ENCODE measurements at regions of chr21 and their contacts with region 1.

Region 1: GRCh38 chr21:41369105-41369919 is 7.5 kb downstream of the MX2 start:
- DNase-seq: peak; percentile 51
- ATAC-seq: peak; percentile 47
- H3K4me3 Mint-ChIP-seq: peak overlapping the region; percentile 71
- H3K27ac Mint-ChIP-seq: peak overlapping the region; percentile 85
- H3K4me1 Mint-ChIP-seq: peaks cover 72% of the 10 kb centered on the region
- H3K27me3 Mint-ChIP-seq: no peaks in the 10 kb centered on the region
- CTCF ChIP-seq: no peak

Region 2: DNA sequence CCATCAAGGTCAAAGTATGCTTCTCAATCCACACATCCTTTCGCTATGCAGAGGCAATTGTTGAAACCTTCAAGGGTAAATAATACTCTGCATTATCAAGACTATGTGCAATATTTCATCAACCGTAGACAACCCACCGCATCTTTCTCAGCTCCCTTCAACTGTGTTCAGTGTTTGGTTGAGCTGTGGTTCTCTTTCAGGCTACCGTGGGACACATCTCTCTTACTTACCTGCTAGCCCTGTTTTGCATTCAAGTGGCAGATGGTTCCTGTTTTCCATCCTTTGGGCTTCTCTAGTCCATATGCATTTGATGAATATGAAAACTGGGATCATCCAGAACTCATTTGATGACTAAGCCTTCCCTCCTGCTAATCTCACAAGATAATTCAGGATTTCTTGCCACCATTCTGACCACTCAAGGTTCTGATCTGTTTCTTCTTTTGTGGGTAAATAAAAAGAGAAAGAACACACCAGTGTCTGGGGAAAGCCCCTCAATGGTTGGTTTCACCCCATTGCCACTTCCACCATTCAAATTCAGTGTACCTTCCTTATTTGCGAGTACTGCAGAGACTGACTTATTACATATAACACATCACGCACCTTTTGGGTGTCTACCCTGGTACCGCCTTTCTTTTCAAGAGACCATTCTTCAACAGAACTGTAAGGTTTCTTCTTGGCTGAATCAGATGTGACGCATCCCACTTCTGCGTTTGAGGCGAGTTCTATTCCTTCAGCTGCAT is 139.6 kb before region 1 on chr21:
- CTCF ChIA-PET with region 1: no interaction called
- POLR2A ChIA-PET with region 1: interaction called, 9 read pairs
- intact Hi-C with region 1: loop called (anchors 2 kb)
- DNase-seq: no peak
- ATAC-seq: peak; percentile 82
- H3K4me3 Mint-ChIP-seq: peak overlapping the region; percentile 78
- H3K27ac Mint-ChIP-seq: peak overlapping the region; percentile 91
- H3K4me1 Mint-ChIP-seq: peaks cover 82% of the 10 kb centered on the region
- H3K27me3 Mint-ChIP-seq: no peaks in the 10 kb centered on the region
- CTCF ChIP-seq: no peak

Region 3: GRCh38 chr21:41419911-41420862 is 50.9 kb after region 1 on chr21:
- CTCF ChIA-PET with region 1: no interaction called
- POLR2A ChIA-PET with region 1: interaction called, 37 read pairs
- intact Hi-C with region 1: loop called (anchors 1 kb)
- DNase-seq: peak; percentile 47
- ATAC-seq: peak; percentile 93
- H3K4me3 Mint-ChIP-seq: peak overlapping the region; percentile 81
- H3K27ac Mint-ChIP-seq: peak overlapping the region; percentile 82
- H3K4me1 Mint-ChIP-seq: peaks cover 61% of the 10 kb centered on the region
- H3K27me3 Mint-ChIP-seq: no peaks in the 10 kb centered on the region
- CTCF ChIP-seq: no peak

Region 4: DNA sequence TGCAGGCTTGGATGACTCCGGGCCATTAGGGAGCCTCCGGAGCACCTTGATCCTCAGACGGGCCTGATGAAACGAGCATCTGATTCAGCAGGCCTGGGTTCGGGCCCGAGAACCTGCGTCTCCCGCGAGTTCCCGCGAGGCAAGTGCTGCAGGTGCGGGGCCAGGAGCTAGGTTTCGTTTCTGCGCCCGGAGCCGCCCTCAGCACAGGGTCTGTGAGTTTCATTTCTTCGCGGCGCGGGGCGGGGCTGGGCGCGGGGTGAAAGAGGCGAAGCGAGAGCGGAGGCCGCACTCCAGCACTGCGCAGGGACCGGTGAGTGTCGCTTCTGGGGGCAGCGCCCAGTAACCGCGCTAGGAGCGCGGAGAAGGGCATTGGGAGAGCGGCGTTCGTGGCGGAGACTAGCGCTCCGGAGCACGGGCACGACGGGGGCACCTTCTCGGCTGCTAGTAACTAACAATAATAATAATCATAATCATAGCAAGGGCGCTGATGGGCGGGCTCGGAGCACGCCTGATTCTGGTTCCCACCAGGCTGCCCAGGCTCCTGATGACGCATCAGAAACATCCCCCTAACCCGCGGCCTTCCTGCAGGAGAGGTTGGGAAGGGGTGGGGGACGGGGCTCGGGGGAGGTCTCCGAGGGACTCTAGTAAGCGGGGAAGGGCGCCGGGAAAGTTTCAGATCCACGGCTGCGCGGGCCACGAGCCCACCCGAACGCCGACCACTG is 56.8 kb after region 1 on chr21 and contains the start of gene MX1:
- CTCF ChIA-PET with region 1: interaction called, 9 read pairs
- POLR2A ChIA-PET with region 1: interaction called, 37 read pairs
- intact Hi-C with region 1: loop called (anchors 1 kb)
- DNase-seq: peak; percentile 77
- ATAC-seq: peak; percentile 97
- H3K4me3 Mint-ChIP-seq: peak within 1 kb of the TSS; percentile 96
- H3K27ac Mint-ChIP-seq: peak within 1 kb of the TSS; percentile 91
- H3K4me1 Mint-ChIP-seq: peaks cover 85% of the 10 kb centered on the region
- H3K27me3 Mint-ChIP-seq: no peaks in the 10 kb centered on the region
- CTCF ChIP-seq: no peak
- total RNA-seq, gene MX1: 64.2 and 64.8 TPM in 2 replicates

Region 5: GRCh38 chr21:41431788-41432548 is 62.7 kb after region 1 on chr21:
- CTCF ChIA-PET with region 1: interaction called, 9 read pairs
- POLR2A ChIA-PET with region 1: interaction called, 37 read pairs
- intact Hi-C with region 1: loop called (anchors 1 kb)
- DNase-seq: peak; percentile 53
- ATAC-seq: peak; percentile 98
- H3K4me3 Mint-ChIP-seq: peak overlapping the region; percentile 52
- H3K27ac Mint-ChIP-seq: peak overlapping the region; percentile 65
- H3K4me1 Mint-ChIP-seq: peaks cover 56% of the 10 kb centered on the region
- H3K27me3 Mint-ChIP-seq: no peaks in the 10 kb centered on the region
- CTCF ChIP-seq: no peak

Region 6: DNA sequence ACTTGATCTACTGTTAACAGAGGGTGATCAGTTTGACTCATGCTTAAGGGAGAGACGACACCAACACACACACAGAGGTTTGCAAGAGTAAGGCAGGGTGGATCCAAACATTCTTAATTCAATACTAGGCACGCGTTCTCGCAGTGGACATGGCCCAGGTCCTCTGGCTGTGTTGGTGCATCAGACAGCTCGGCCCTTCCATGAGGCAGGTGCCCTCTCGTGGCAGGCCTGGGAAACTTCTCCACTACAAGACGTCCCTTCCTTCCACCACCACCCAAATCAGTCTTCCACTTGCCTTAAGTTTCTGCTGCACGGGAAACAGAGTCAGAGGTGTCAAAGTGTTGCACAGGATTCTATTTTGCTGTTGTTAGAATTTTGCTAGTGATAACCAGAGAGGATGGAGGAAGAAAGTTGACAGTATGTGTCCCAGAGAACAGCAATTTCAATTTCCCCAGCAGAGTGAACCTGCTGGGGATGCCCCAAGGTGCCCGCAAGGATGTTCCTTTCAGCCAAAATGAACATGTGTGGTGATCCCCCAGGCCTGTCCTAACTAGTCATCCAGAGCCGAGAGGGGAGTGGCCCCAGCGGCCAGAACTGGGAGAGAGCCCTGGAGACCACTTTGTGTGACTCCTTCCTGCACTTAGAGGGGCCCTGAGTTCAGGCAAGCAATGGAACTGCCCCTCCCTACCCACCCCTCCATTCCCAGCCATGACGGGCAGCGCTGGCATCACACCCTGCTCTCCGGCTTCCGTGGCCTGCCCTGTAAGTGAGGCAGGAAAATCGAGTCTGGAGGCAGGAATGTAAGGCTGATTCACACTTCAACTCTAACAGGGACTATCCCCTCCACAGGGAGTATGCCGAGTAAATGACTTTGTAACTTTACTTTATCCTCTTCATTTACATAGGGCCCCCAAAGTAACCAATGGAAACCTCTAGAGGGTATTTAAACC is 91.5 kb after region 1 on chr21:
- CTCF ChIA-PET with region 1: interaction called, 5 read pairs
- POLR2A ChIA-PET with region 1: no interaction called
- intact Hi-C with region 1: loop called (anchors 1 kb)
- DNase-seq: peak; percentile 39
- ATAC-seq: peak; percentile 80
- H3K4me3 Mint-ChIP-seq: no peak overlapping the region
- H3K27ac Mint-ChIP-seq: peak overlapping the region; percentile 0
- H3K4me1 Mint-ChIP-seq: peaks cover 21% of the 10 kb centered on the region
- H3K27me3 Mint-ChIP-seq: no peaks in the 10 kb centered on the region
- CTCF ChIP-seq: peak; percentile 39

Measured in activated B cell treated with CpG ODN at 0.5 μM for 24 hours (primary cell).